Panc1 (cell line): ENCODE measurements at regions of chr10 and their contacts with region 1.

Region 1: DNA sequence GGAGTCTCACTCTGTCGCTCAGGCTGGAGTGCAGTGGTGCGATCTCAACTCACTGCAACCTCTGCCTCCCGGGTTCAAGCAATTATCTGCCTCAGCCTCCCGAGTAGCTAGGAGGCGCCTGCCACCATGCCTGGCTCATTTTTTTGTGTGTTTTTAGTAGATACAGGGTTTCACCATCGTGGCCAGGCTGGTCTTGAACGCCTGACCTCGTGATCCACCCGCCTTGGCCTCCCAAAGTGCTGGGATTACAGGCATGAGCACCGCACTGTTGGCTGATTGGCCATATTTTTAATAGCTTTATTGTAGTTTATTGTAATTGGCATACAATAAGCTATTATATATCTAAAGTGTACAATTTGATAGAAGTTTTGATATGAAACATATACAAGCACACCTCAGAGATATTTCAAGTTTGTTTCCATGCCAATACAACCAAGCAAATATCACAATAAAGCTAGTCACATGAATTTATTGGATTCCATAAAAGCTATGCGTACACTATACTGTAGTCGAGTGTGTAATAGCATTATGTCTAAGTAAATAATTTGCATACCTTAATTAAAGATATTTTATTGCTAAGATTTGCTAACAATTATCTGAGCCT is 5.6 kb downstream of the PLEKHS1 start:
- DNase-seq: no peak
- ATAC-seq: no peak
- H3K4me3 ChIP-seq: no peak overlapping the region
- H3K27ac ChIP-seq: no peak overlapping the region
- H3K4me1 ChIP-seq: no peaks in the 10 kb centered on the region
- H3K27me3 ChIP-seq: peaks cover 3% of the 10 kb centered on the region; the same call in 1 of the 2 replicates
- CTCF ChIP-seq: no peak

Region 2: GRCh38 chr10:113000876-113001598 is 756.0 kb before region 1 on chr10:
- CTCF ChIA-PET with region 1: no interaction called
- POLR2A ChIA-PET with region 1: no interaction called
- in situ Hi-C with region 1: no loop called
- intact Hi-C with region 1: no loop called
- DNase-seq: no peak
- ATAC-seq: 0 out of 2 replicates have a peak, but pooled peaks have one; percentile 36
- H3K4me3 ChIP-seq: no peak overlapping the region
- H3K27ac ChIP-seq: peak overlapping the region; percentile 55
- H3K4me1 ChIP-seq: peaks cover 73% of the 10 kb centered on the region
- H3K27me3 ChIP-seq: no peaks in the 10 kb centered on the region
- CTCF ChIP-seq: no peak

Region 3: DNA sequence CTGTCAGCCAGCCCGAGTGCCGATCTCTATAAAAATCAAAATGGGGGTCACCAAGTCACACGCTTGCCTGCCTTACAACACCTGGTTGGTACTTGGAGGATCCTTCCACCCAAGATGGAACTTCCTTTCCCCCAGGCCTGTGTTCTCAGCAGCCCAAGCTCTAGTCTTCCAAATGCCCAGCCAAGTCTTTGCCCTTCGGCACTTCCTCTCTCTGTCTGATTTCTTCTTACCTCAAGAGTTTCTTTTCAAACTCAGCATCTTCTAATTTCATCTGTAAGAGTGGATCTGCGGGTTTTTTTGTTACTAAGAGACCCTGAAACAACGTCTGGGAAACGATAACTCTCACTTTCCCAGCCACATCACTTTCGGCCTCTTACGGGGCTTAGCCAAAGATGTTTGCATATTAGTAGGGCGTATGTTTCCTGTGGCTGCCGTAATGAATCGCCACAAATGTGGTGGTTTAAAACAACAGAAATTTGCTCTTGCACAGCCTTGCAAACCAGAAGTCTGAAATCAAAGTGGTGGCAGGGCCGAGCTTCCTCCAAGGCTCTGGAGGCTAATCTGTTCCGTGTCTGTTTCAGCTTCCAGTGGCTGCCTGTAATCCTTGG is 587.1 kb before region 1 on chr10:
- CTCF ChIA-PET with region 1: no interaction called
- POLR2A ChIA-PET with region 1: no interaction called
- in situ Hi-C with region 1: no loop called
- intact Hi-C with region 1: no loop called
- DNase-seq: no peak
- ATAC-seq: no peak
- H3K4me3 ChIP-seq: no peak overlapping the region
- H3K27ac ChIP-seq: no peak overlapping the region
- H3K4me1 ChIP-seq: no peaks in the 10 kb centered on the region
- H3K27me3 ChIP-seq: no peaks in the 10 kb centered on the region
- CTCF ChIP-seq: no peak

Region 4: GRCh38 chr10:113788604-113789083 is 31.6 kb after region 1 on chr10:
- CTCF ChIA-PET with region 1: no interaction called
- POLR2A ChIA-PET with region 1: interaction called, 14 read pairs
- in situ Hi-C with region 1: no loop called
- intact Hi-C with region 1: no loop called
- DNase-seq: peak; percentile 46
- ATAC-seq: peak; percentile 77
- H3K4me3 ChIP-seq: no peak overlapping the region
- H3K27ac ChIP-seq: 0 out of 2 replicates have a peak overlapping the region, but pooled peaks have one; percentile 9
- H3K4me1 ChIP-seq: peaks cover 3% of the 10 kb centered on the region; the same call in 1 of the 2 replicates
- H3K27me3 ChIP-seq: no peaks in the 10 kb centered on the region
- CTCF ChIP-seq: no peak